ENCODE measurements at regions of chr10 and their contacts with region 1.

Region 1: GRCh38 chr10:69800109-69800508 is 1.6 kb upstream of the COL13A1 start:
- DNase-seq: no peak
- ATAC-seq: peak; percentile 34 to 52
- H3K4me3 ChIP-seq: no peak overlapping the region
- H3K27ac ChIP-seq: no peak overlapping the region
- H3K4me1 ChIP-seq: peaks cover 3% of the 10 kb centered on the region
- H3K27me3 ChIP-seq: no peaks in the 10 kb centered on the region

Region 2: DNA sequence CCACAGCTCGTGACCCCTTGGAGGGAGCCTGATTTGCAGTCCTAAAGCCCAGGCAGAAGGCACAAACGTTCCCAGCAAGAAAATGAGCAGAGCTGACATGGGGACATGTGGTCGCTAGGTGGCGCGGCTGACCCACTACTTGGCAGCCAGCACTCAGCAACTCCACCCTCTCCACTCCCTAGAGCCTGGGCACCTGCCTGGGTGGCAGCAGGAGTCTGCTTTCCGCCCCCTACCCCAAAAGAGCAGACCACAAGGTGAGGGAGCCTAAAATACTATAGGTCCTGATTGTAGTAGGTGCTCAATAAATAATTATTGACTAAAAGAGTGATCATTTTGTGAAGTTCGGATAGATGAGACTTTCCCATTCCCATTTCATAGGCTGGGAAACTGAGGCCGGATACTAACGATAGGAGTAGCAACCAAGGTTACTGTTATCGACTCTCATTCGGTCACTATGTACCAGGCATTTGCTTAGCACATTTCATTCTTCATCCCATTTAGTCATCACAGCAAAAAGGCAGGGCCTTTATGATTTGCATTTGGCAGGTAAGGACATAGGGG is 284.3 kb before region 1 on chr10:
- intact Hi-C with region 1: loop called in 1 of 4 experiments (anchors 10 kb)
- DNase-seq: peak; percentile 64 to 85 (median 85)
- ATAC-seq: peak; percentile 84 to 88
- H3K4me3 ChIP-seq: no peak overlapping the region
- H3K27ac ChIP-seq: no peak overlapping the region
- H3K4me1 ChIP-seq: no peaks in the 10 kb centered on the region
- H3K27me3 ChIP-seq: no peaks in the 10 kb centered on the region

Region 3: GRCh38 chr10:69649786-69650555 is 150.1 kb before region 1 on chr10:
- intact Hi-C with region 1: loop called in 1 of 4 experiments (anchors 10 kb)
- DNase-seq: no peak
- ATAC-seq: no peak
- H3K4me3 ChIP-seq: no peak overlapping the region
- H3K27ac ChIP-seq: no peak overlapping the region
- H3K4me1 ChIP-seq: no peaks in the 10 kb centered on the region
- H3K27me3 ChIP-seq: no peaks in the 10 kb centered on the region

Region 4: DNA sequence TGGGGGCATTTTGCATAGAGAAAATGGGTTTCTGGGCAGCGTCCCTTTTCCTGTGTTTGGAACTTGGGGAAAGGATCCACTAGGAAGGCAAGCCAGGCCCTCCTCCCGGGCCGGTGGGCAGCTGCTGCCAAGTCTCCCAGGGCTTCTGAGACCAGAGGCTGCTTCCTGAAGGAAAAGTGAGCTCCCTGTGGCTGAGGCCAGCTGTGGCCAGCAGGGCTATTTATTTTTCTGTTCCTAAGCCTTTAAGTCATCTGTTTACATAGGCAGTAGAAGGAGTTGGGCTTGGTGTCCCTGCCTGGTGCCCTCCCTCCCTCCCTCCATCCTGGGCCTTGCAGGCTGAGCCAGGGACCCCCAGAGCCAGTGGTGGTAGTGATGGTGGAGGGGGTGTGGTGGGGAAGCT is 68.9 kb before region 1 on chr10:
- intact Hi-C with region 1: loop called in 1 of 4 experiments (anchors 5 kb)
- DNase-seq: peak in 1 of 3 donors; percentile 77
- ATAC-seq: no peak
- H3K4me3 ChIP-seq: no peak overlapping the region
- H3K27ac ChIP-seq: no peak overlapping the region
- H3K4me1 ChIP-seq: peaks cover 12% of the 10 kb centered on the region
- H3K27me3 ChIP-seq: no peaks in the 10 kb centered on the region

Region 5: DNA sequence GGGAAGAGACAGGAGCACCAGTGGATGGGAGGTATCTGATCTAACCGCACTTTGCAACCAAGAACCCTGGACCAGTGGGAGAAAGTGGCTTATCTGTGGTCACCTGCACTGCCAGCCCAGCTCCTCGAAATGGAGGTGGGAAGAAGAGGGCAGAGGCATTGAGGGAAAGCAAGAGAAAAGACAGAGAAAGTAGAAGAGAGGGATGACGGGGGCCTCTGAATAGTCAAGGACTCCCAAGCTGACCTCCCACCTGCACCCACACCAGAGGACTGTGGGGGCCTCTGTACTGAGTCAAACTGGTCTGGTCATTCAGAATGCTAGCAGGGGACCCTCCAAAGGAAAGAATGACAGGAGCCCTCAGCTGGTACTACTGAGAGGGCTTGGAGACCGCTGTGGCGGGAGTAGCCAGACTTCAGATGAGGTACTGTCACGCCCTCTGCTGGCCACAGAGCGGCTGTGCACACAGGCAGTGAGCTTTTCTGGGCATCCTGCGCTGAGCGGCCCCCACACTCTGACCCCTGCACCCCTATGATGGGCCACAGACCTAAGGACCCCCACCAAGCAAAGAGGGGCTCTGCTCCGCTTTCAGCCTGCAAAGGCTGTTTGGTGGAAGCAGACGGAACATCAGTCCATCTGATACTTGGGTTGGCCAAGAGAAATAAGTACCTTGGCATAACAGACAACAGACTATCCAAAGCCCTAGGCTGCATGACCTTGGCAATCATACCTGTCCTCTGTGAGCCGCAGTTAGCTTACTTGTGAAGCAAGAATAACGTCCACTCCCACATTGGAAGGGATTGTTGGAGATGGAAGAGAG is 114.5 kb after region 1 on chr10:
- intact Hi-C with region 1: loop called in 3 of 4 experiments (anchors 5 to 10 kb)
- DNase-seq: peak; percentile 77 to 91 (median 86)
- ATAC-seq: peak; percentile 71 to 78
- H3K4me3 ChIP-seq: no peak overlapping the region
- H3K27ac ChIP-seq: no peak overlapping the region
- H3K4me1 ChIP-seq: peaks cover 19% of the 10 kb centered on the region
- H3K27me3 ChIP-seq: no peaks in the 10 kb centered on the region

Measured in right cardiac atrium (tissue), 5 donors.